A549 (cell line): ENCODE measurements at regions of chr1 and their contacts with region 1.

Region 1: GRCh38 chr1:162056043-162056442 is 13.4 kb upstream of the NOS1AP start:
- DNase-seq: peak; percentile 64 to 72
- ATAC-seq: peak; percentile 88 to 96
- H3K4me3 ChIP-seq: no peak overlapping the region
- H3K27ac ChIP-seq: no peak overlapping the region
- H3K4me1 ChIP-seq: peaks cover 13% of the 10 kb centered on the region
- CTCF ChIP-seq: peak; percentile 86
- EP300 ChIP-seq: no peak
- POLR2A ChIP-seq: no peak
- RAD21 ChIP-seq: peak; percentile 96 to 97

Region 2: GRCh38 chr1:161766102-161766981 is 289.7 kb before region 1 on chr1 and contains the start of gene ATF6:
- CTCF ChIA-PET with region 1: no interaction called
- POLR2A ChIA-PET with region 1: no interaction called
- DNase-seq: peak; percentile 78 to 97
- ATAC-seq: peak; percentile 75 to 84
- H3K4me3 ChIP-seq: peak within 1 kb of the TSS; percentile 93
- H3K27ac ChIP-seq: peak within 1 kb of the TSS; percentile 92 to 94
- H3K4me1 ChIP-seq: peaks cover 10% of the 10 kb centered on the region; the same call in 1 of the 3 replicates
- CTCF ChIP-seq: no peak
- EP300 ChIP-seq: 0 out of 5 replicates have a peak, but pooled peaks of 1 of the 2 experiments have one; percentile 19
- POLR2A ChIP-seq: peak; percentile 43
- RAD21 ChIP-seq: no peak
- polyA plus RNA-seq, gene ATF6: 26.8 and 28.0 TPM in 2 replicates

Region 3: GRCh38 chr1:162035241-162035640 is 20.8 kb before region 1 on chr1:
- CTCF ChIA-PET with region 1: interaction called, 13 read pairs
- POLR2A ChIA-PET with region 1: no interaction called
- DNase-seq: no peak
- ATAC-seq: no peak
- H3K4me3 ChIP-seq: no peak overlapping the region
- H3K27ac ChIP-seq: no peak overlapping the region
- H3K4me1 ChIP-seq: peaks cover 6% of the 10 kb centered on the region; the same call in 2 of the 3 replicates
- CTCF ChIP-seq: no peak
- EP300 ChIP-seq: no peak
- POLR2A ChIP-seq: no peak
- RAD21 ChIP-seq: no peak

Region 4: DNA sequence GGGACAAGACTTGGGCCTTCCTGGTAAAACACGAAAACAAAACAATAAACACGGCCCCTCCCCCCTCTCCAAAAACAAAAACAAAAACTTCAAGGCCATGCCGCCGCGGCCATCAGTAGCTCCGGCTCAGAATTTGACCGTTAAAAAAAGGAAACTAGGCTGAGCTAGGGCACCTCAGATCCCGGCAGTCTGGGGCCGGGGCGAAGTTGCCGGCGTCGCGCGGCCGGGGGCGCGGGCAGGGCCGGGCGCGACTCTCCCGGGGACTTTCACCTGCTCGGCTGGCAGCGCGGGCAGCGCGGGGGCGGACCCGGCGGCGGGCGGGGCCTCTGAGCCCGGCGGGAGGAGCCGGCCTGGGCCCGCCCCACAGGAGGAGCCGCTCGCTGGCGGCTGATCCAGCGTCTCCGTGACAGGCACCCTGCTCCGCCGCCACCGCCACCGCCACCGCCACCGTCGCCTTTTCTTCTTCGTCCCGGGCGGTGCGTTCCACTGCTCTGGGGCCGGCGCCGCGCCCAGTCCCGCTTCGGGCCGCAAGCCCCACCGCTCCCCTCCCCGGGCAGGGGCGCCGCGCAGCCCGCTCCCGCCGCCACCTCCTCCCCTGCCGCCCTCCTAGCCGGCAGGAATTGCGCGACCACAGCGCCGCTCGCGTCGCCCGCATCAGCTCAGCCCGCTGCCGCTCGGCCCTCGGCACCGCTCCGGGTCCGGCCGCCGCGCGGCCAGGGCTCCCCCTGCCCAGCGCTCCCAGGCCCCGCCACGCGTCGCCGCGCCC is 13.5 kb after region 1 on chr1 and contains the start of gene NOS1AP:
- CTCF ChIA-PET with region 1: interaction called, 14 read pairs
- POLR2A ChIA-PET with region 1: no interaction called
- DNase-seq: peak; percentile 62 to 63
- ATAC-seq: peak; percentile 96 to 99
- H3K4me3 ChIP-seq: peak within 1 kb of the TSS; percentile 74
- H3K27ac ChIP-seq: peak within 1 kb of the TSS; percentile 60 to 80; a peak in 5 of 6 replicates
- H3K4me1 ChIP-seq: peaks cover 9% of the 10 kb centered on the region; the same call in 1 of the 3 replicates
- CTCF ChIP-seq: no peak; the same call in 2 of the 3 replicates
- EP300 ChIP-seq: no peak
- POLR2A ChIP-seq: no peak
- RAD21 ChIP-seq: no peak; a peak in 1 of 5 replicates
- polyA plus RNA-seq, gene NOS1AP: 0.13 and 0.17 TPM in 2 replicates

Region 5: DNA sequence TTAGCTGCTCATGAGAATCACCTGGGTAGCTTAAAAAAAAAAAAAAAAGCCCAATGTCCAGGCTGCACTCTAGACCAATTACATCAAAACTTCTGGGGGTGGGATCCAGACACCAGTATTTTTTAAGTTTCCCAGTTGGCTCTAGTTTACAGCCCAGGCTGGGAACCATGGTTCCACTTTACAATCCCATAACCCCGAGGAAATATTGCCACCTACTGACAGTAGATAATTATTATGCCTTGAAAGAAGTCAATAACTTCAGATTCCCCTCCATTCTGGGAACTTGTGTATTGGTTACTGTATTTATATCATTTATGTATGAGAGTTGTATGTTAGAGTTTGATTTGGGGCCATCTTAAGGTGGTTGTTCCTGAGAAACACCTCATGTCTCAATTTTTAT is 220.4 kb after region 1 on chr1:
- CTCF ChIA-PET with region 1: interaction called, 44 read pairs
- POLR2A ChIA-PET with region 1: no interaction called
- DNase-seq: peak; percentile 25 to 35
- ATAC-seq: peak; percentile 68 to 81; a peak in 4 of 6 replicates
- H3K4me3 ChIP-seq: no peak overlapping the region
- H3K27ac ChIP-seq: no peak overlapping the region
- H3K4me1 ChIP-seq: no peaks in the 10 kb centered on the region
- CTCF ChIP-seq: peak; percentile 66
- EP300 ChIP-seq: no peak
- POLR2A ChIP-seq: no peak
- RAD21 ChIP-seq: peak; percentile 78 to 83

Region 6: GRCh38 chr1:162391790-162392563 is 335.9 kb after region 1 on chr1:
- CTCF ChIA-PET with region 1: interaction called, 15 read pairs
- POLR2A ChIA-PET with region 1: interaction called, 3 read pairs
- DNase-seq: peak; percentile 40 to 65
- ATAC-seq: peak in 1 of 2 experiments; percentile 76; a peak in 3 of 6 replicates
- H3K4me3 ChIP-seq: no peak overlapping the region
- H3K27ac ChIP-seq: no peak overlapping the region
- H3K4me1 ChIP-seq: no peaks in the 10 kb centered on the region
- CTCF ChIP-seq: peak; percentile 82
- EP300 ChIP-seq: no peak
- POLR2A ChIP-seq: no peak
- RAD21 ChIP-seq: peak; percentile 76 to 81